Naive thymus-derived CD4-positive, alpha-beta T cell (primary cell): ENCODE measurements at regions of chr9 and their contacts with region 1.

Region 1: GRCh38 chr9:5582835-5583195 is 46.1 kb upstream of the RIC1 start:
- DNase-seq: peak in 7 of 9 donors; percentile 55 to 81 (median 68)
- ATAC-seq: peak; percentile 82
- H3K4me3 ChIP-seq: no peak overlapping the region
- H3K4me3 Mint-ChIP-seq: peak overlapping the region in 7 of 10 donors; percentile 0 to 43 (median 39)
- H3K27ac ChIP-seq: peak overlapping the region; percentile 43
- H3K27ac Mint-ChIP-seq: peak overlapping the region; percentile 48 to 98 (median 86)
- H3K4me1 ChIP-seq: peaks cover 24 to 30% of the 10 kb centered on the region in 2 donors
- H3K4me1 Mint-ChIP-seq: peaks cover 28 to 79% (median 62%) of the 10 kb centered on the region in 7 donors
- H3K27me3 ChIP-seq: no peaks in the 10 kb centered on the region
- H3K27me3 Mint-ChIP-seq: no peaks in the 10 kb centered on the region

Region 2: DNA sequence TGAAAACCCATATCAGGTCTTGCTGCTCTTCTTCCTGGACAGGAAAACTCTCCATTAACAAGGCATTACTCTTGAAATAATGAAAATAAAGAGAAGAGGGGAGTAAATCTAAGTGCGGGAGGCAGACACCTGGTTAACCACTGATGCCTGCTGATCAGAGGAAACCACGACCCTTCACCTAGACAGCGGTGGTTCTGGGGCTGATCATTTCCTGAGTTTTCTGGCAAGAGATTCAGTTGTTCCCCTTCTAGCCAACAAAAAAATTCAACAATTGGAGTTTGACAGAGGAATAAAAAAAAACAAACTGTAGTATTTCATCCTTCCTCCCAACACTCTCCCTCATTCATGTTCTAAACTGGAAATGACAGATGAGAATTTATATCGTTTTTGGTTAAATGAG is 281.3 kb before region 1 on chr9:
- CTCF ChIA-PET with region 1: no interaction called
- POLR2A ChIA-PET with region 1: no interaction called
- intact Hi-C with region 1: loop called in 1 of 2 experiments (anchors 10 kb)
- DNase-seq: peak in 6 of 9 donors; percentile 16 to 34 (median 21)
- ATAC-seq: no peak
- H3K4me3 ChIP-seq: no peak overlapping the region
- H3K4me3 Mint-ChIP-seq: peak overlapping the region; percentile 5 to 80 (median 69)
- H3K27ac ChIP-seq: no peak overlapping the region
- H3K27ac Mint-ChIP-seq: peak overlapping the region in 7 of 9 donors; percentile 52 to 91 (median 78)
- H3K4me1 ChIP-seq: peaks cover 7 to 11% of the 10 kb centered on the region in 2 donors
- H3K4me1 Mint-ChIP-seq: peaks cover 15 to 40% (median 25%) of the 10 kb centered on the region in 7 donors
- H3K27me3 ChIP-seq: no peaks in the 10 kb centered on the region
- H3K27me3 Mint-ChIP-seq: no peaks in the 10 kb centered on the region

Region 3: GRCh38 chr9:5450359-5451091 is 132.3 kb before region 1 on chr9 and contains the start of gene CD274:
- CTCF ChIA-PET with region 1: interaction called, 83 read pairs
- POLR2A ChIA-PET with region 1: interaction called, 82 read pairs
- intact Hi-C with region 1: loop called (anchors 1 kb)
- DNase-seq: peak; percentile 61 to 89 (median 80)
- ATAC-seq: peak; percentile 95
- H3K4me3 ChIP-seq: peak within 1 kb of the TSS; percentile 78
- H3K4me3 Mint-ChIP-seq: peak within 1 kb of the TSS; percentile 92 to 98 (median 95)
- H3K27ac ChIP-seq: peak within 1 kb of the TSS; percentile 94
- H3K27ac Mint-ChIP-seq: peak within 1 kb of the TSS; percentile 97 to 99 (median 98)
- H3K4me1 ChIP-seq: peaks cover 0 to 11% of the 10 kb centered on the region in 2 donors
- H3K4me1 Mint-ChIP-seq: peaks cover 33 to 69% (median 62%) of the 10 kb centered on the region in 7 donors
- H3K27me3 ChIP-seq: no peaks in the 10 kb centered on the region
- H3K27me3 Mint-ChIP-seq: no peaks in the 10 kb centered on the region
- total RNA-seq, gene CD274: 2.9 to 38.7 (median 7.8) TPM

Region 4: GRCh38 chr9:5529683-5530221 is 53.1 kb before region 1 on chr9:
- CTCF ChIA-PET with region 1: interaction called, 5 read pairs
- POLR2A ChIA-PET with region 1: interaction called, 3 read pairs
- intact Hi-C with region 1: loop called (anchors 2 to 5 kb)
- DNase-seq: no peak
- ATAC-seq: no peak
- H3K4me3 ChIP-seq: no peak overlapping the region
- H3K4me3 Mint-ChIP-seq: no peak overlapping the region
- H3K27ac ChIP-seq: no peak overlapping the region
- H3K27ac Mint-ChIP-seq: peak overlapping the region in 6 of 9 donors; percentile 5 to 72 (median 28)
- H3K4me1 ChIP-seq: peaks cover 19 to 32% of the 10 kb centered on the region in 2 donors
- H3K4me1 Mint-ChIP-seq: peaks cover 20 to 50% (median 42%) of the 10 kb centered on the region in 7 donors
- H3K27me3 ChIP-seq: no peaks in the 10 kb centered on the region
- H3K27me3 Mint-ChIP-seq: no peaks in the 10 kb centered on the region

Region 5: GRCh38 chr9:5569409-5569808 is 13.4 kb before region 1 on chr9:
- CTCF ChIA-PET with region 1: interaction called, 3 read pairs
- POLR2A ChIA-PET with region 1: interaction called, 15 read pairs
- intact Hi-C with region 1: loop called in 1 of 2 experiments (anchors 2 kb)
- DNase-seq: no peak
- ATAC-seq: peak; percentile 90
- H3K4me3 ChIP-seq: no peak overlapping the region
- H3K4me3 Mint-ChIP-seq: peak overlapping the region in 3 of 10 donors; percentile 3 to 62 (median 60)
- H3K27ac ChIP-seq: no peak overlapping the region
- H3K27ac Mint-ChIP-seq: peak overlapping the region in 5 of 9 donors; percentile 5 to 92 (median 67)
- H3K4me1 ChIP-seq: peaks cover 13 to 14% of the 10 kb centered on the region in 2 donors
- H3K4me1 Mint-ChIP-seq: peaks cover 14 to 24% (median 18%) of the 10 kb centered on the region in 7 donors
- H3K27me3 ChIP-seq: no peaks in the 10 kb centered on the region
- H3K27me3 Mint-ChIP-seq: no peaks in the 10 kb centered on the region

Region 6: GRCh38 chr9:5652821-5653220 is 70.0 kb after region 1 on chr9:
- CTCF ChIA-PET with region 1: no interaction called
- POLR2A ChIA-PET with region 1: no interaction called
- intact Hi-C with region 1: no loop called
- DNase-seq: no peak
- ATAC-seq: no peak
- H3K4me3 ChIP-seq: no peak overlapping the region
- H3K4me3 Mint-ChIP-seq: no peak overlapping the region
- H3K27ac ChIP-seq: no peak overlapping the region
- H3K27ac Mint-ChIP-seq: no peak overlapping the region
- H3K4me1 ChIP-seq: no peaks in the 10 kb centered on the region
- H3K4me1 Mint-ChIP-seq: peaks cover 12 to 37% (median 34%) of the 10 kb centered on the region in 7 donors
- H3K27me3 ChIP-seq: no peaks in the 10 kb centered on the region
- H3K27me3 Mint-ChIP-seq: no peaks in the 10 kb centered on the region